Motor neuron (in vitro differentiated cells): ENCODE measurements at regions of chr12 and their contacts with region 1.

Region 1: DNA sequence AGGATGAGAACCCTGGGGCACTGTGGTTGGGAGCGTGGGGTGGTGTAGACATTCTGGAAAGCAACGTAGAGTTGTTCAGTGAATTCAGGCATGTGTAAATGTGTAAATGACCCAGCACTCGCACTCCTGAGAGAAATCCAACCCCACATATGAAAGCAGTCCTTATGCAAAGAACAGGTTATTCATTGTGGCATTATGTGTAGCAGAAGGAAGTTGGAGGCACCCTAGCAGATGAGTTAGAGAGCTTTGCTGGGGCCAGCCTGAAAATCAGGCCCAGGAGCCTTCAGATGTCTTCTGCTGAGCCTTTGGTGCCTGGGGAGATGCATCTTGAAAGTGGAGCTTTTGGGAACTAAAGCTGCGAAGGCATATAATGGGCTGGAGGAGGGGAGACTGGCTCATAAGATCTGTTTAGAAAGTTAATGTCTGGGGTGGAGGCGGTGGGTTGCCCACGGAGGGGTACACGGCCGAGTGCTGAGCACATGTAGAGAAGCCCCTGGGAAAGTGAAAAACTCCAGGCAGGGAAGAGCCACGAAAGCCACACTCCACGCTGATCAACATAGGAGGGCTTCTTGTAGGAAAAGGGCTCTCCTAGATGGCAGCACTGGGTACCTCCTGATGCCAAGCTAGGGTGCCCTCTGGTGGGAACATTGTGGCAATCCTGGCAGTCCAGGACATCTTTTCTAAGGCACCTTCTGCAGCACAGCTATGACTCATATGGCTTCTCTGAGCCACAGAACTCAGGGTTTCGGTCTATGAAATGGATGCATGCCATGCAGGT is 6.0 kb upstream of the KRT83 start:
- ATAC-seq: peak in 5 of 8 experiments; percentile 61 to 99 (median 88)
- H3K4me3 ChIP-seq: no peak overlapping the region
- H3K27ac ChIP-seq: no peak overlapping the region
- H3K4me1 ChIP-seq: no peaks in the 10 kb centered on the region

Region 2: DNA sequence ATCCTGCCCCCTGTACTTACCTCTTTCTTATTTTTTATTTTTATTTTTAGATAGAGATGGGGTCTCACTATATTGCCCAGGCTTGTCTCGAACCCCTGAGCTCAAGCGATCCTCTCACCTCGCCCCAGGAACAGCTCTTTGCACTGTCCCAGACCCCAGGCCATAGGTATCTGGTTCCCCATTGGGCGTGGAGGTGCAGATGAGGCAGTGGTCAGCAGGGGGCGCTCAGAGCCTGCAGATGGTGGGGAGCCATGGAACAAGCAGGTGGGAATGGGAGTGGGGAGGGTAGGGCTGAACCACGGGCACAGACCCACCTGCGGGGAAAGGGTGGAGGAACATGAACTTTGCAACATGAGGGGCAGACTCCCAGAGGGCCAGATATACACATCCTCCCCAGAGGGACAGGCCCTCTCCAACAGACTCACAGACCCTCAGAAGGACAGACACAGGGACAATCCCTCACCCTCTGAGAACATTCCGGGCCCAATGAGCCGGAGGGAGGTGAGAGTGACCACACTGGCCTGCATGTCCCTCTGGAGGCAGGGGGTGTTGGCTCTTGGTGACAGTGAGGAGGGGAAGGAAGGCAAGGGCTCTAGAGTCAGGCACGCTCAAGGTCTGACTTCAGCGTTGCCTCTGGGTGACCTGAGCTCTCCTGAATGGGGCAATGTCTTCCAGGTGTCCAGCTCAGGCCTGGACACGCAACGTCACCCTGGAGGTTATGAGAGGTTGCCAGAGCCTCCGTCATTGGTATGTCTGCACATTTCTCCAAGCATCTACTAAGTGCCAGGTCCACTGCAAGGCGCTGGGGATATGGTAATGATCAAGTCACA is 170.3 kb before region 1 on chr12:
- in situ Hi-C with region 1: loop called in 2 of 9 experiments (anchors 10 kb)
- ATAC-seq: peak; percentile 28 to 84 (median 76)
- H3K4me3 ChIP-seq: no peak overlapping the region
- H3K27ac ChIP-seq: no peak overlapping the region
- H3K4me1 ChIP-seq: no peaks in the 10 kb centered on the region